Common myeloid progenitor, CD34-positive (primary cell): ENCODE measurements at regions of chr9 and their contacts with region 1.

Region 1: GRCh38 chr9:21455320-21455719 is 15.1 kb downstream of the IFNA1 start:
- DNase-seq: peak; percentile 63 to 75 (median 67)
- H3K4me3 ChIP-seq: no peak overlapping the region
- H3K27ac ChIP-seq: no peak overlapping the region
- H3K4me1 ChIP-seq: no peaks in the 10 kb centered on the region
- H3K27me3 ChIP-seq: no peaks in the 10 kb centered on the region

Region 2: DNA sequence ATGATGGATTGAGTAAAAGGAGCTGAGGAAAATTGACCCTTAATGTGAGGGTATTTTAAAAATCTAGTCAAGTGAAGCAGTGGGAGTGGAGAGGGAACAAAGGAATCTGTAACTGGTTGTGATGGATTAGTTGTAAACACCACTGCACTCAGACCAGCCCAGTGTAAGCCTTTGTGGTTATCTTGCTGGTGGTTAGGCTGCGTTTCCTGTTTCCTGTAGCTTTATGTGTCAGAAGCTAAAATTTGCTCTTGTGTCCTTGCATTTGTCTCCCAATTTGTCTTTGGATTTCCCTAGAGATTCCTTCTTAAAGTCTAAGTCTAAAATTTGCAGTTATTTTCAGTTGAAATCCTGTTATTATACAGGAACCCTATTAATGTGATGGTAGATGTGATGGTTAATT is 295.1 kb before region 1 on chr9:
- CTCF ChIA-PET with region 1: no interaction called
- POLR2A ChIA-PET with region 1: no interaction called
- DNase-seq: peak; percentile 19 to 78 (median 67)
- H3K4me3 ChIP-seq: no peak overlapping the region
- H3K27ac ChIP-seq: no peak overlapping the region
- H3K4me1 ChIP-seq: peaks cover 0 to 4% (median 0%) of the 10 kb centered on the region in 4 experiments
- H3K27me3 ChIP-seq: no peaks in the 10 kb centered on the region

Region 3: GRCh38 chr9:21239911-21240310 is 215.4 kb before region 1 on chr9 and contains the start of gene IFNA14:
- CTCF ChIA-PET with region 1: interaction called, 12 read pairs
- POLR2A ChIA-PET with region 1: no interaction called
- DNase-seq: peak in 1 of 3 donors; percentile 2
- H3K4me3 ChIP-seq: no peak within 1 kb of the TSS
- H3K27ac ChIP-seq: no peak within 1 kb of the TSS
- H3K4me1 ChIP-seq: peaks cover 2 to 10% (median 5%) of the 10 kb centered on the region in 4 experiments
- H3K27me3 ChIP-seq: no peaks in the 10 kb centered on the region

Region 4: GRCh38 chr9:21326526-21327139 is 128.7 kb before region 1 on chr9:
- CTCF ChIA-PET with region 1: interaction called, 22 read pairs
- POLR2A ChIA-PET with region 1: interaction called, 3 read pairs
- DNase-seq: peak; percentile 55 to 76 (median 73)
- H3K4me3 ChIP-seq: no peak overlapping the region
- H3K27ac ChIP-seq: no peak overlapping the region
- H3K4me1 ChIP-seq: peaks cover 0 to 20% (median 13%) of the 10 kb centered on the region in 4 experiments
- H3K27me3 ChIP-seq: no peaks in the 10 kb centered on the region

Region 5: GRCh38 chr9:21395778-21396717 is 59.3 kb before region 1 on chr9:
- CTCF ChIA-PET with region 1: interaction called, 11 read pairs
- POLR2A ChIA-PET with region 1: no interaction called
- DNase-seq: peak; percentile 43 to 70 (median 65)
- H3K4me3 ChIP-seq: peak overlapping the region; percentile 20 to 76 (median 68)
- H3K27ac ChIP-seq: no peak overlapping the region
- H3K4me1 ChIP-seq: peaks cover 0 to 8% (median 6%) of the 10 kb centered on the region in 4 experiments
- H3K27me3 ChIP-seq: peaks cover 0 to 32% (median 8%) of the 10 kb centered on the region in 5 experiments

Region 6: GRCh38 chr9:21443849-21444625 is 11.3 kb before region 1 on chr9:
- CTCF ChIA-PET with region 1: interaction called, 65 read pairs
- POLR2A ChIA-PET with region 1: interaction called, 4 read pairs
- DNase-seq: peak; percentile 79 to 95 (median 92)
- H3K4me3 ChIP-seq: peak overlapping the region in 1 of 7 experiments; percentile 57
- H3K27ac ChIP-seq: no peak overlapping the region
- H3K4me1 ChIP-seq: peaks cover 12 to 17% (median 13%) of the 10 kb centered on the region in 4 experiments
- H3K27me3 ChIP-seq: no peaks in the 10 kb centered on the region

Region 7: DNA sequence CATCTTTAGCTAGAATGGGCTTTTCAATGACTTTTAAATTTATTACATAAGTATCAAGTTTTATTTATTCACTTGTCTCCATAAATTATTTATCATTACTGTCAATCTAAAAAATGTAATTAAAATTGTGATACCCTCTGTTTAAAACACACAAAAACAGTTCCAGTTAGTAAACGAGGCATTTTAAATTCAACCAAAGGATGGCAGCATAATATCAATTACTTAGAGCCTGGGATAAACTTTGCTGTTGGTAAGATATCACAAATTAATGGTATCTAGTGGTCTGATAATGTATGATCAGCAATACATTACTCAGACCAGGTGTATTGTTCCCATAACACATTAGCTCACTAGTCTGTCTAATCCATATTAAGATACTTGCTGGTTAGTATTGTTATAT is 36.4 kb after region 1 on chr9:
- CTCF ChIA-PET with region 1: no interaction called
- POLR2A ChIA-PET with region 1: no interaction called
- DNase-seq: no peak
- H3K4me3 ChIP-seq: no peak overlapping the region
- H3K27ac ChIP-seq: no peak overlapping the region
- H3K4me1 ChIP-seq: no peaks in the 10 kb centered on the region
- H3K27me3 ChIP-seq: no peaks in the 10 kb centered on the region